ENCODE measurements at regions of chr15 and their contacts with region 1.

Region 1: GRCh38 chr15:42723054-42723453 is 13.9 kb downstream of the CDAN1 start:
- DNase-seq: no peak
- ATAC-seq: no peak
- H3K4me3 ChIP-seq: no peak overlapping the region
- H3K27ac ChIP-seq: no peak overlapping the region
- H3K4me1 ChIP-seq: no peaks in the 10 kb centered on the region
- H3K27me3 ChIP-seq: no peaks in the 10 kb centered on the region
- CTCF ChIP-seq: no peak

Region 2: GRCh38 chr15:42591238-42591934 is 131.7 kb before region 1 on chr15:
- intact Hi-C with region 1: no loop called
- DNase-seq: no peak
- ATAC-seq: no peak
- H3K4me3 ChIP-seq: no peak overlapping the region
- H3K27ac ChIP-seq: no peak overlapping the region
- H3K4me1 ChIP-seq: peaks cover 0 to 69% (median 37%) of the 10 kb centered on the region in 9 donors
- H3K27me3 ChIP-seq: no peaks in the 10 kb centered on the region
- CTCF ChIP-seq: peak in 6 of 9 donors; percentile 14 to 42 (median 35)

Region 3: GRCh38 chr15:42650208-42651066 is 72.6 kb before region 1 on chr15:
- intact Hi-C with region 1: no loop called
- DNase-seq: peak in 1 of 2 donors; percentile 71
- ATAC-seq: peak; percentile 85 to 97 (median 95)
- H3K4me3 ChIP-seq: no peak overlapping the region
- H3K27ac ChIP-seq: no peak overlapping the region
- H3K4me1 ChIP-seq: peaks cover 0 to 17% (median 3%) of the 10 kb centered on the region in 9 donors
- H3K27me3 ChIP-seq: no peaks in the 10 kb centered on the region
- CTCF ChIP-seq: peak; percentile 53 to 92 (median 82)

Region 4: DNA sequence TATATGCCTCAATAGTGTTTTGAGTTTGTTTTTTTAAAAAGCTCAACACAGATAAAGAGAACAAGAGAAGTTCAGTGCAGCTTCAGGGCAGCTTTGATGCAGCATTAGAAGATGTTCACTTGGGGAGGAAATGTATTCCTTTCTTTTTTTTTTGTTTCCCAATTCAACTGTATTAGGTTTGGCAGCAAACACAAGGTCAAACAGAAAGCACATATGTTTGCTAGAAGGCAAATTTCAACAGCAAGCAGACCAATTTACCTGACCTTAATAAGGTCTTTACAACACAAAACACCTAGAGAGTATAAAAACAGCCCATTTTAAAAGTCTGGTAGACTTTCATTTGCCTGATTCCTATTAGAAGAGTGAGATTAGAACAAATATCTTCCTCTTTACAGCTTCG is 21.1 kb after region 1 on chr15:
- intact Hi-C with region 1: loop called in 1 of 10 experiments (anchors 2 kb)
- DNase-seq: no peak
- ATAC-seq: no peak
- H3K4me3 ChIP-seq: no peak overlapping the region
- H3K27ac ChIP-seq: no peak overlapping the region
- H3K4me1 ChIP-seq: peaks cover 0 to 9% (median 0%) of the 10 kb centered on the region in 9 donors
- H3K27me3 ChIP-seq: no peaks in the 10 kb centered on the region
- CTCF ChIP-seq: no peak

Region 5: GRCh38 chr15:42772144-42772543 is 49.1 kb after region 1 on chr15:
- intact Hi-C with region 1: no loop called
- DNase-seq: peak; percentile 25 to 28
- ATAC-seq: peak in 3 of 8 donors; percentile 43 to 61 (median 46)
- H3K4me3 ChIP-seq: no peak overlapping the region
- H3K27ac ChIP-seq: no peak overlapping the region
- H3K4me1 ChIP-seq: peaks cover 0 to 15% (median 8%) of the 10 kb centered on the region in 9 donors
- H3K27me3 ChIP-seq: no peaks in the 10 kb centered on the region
- CTCF ChIP-seq: no peak

Region 6: DNA sequence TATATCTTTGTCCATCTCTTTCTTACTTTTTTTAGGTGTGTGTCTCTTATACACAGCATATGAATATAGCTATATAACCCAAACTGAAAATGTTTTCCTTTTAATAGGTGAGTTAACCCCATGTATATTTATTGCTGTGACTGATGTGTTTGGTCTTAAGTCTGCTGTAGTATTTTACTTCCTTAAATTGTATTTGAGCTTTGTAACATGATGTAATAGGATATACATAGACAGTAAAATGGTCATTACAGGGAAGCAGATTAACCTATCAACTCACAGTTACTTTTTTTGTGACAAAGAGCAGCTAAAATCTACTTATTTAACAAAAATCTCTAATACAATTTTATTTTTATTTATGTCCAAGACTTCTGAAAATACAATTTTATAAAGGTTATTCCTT is 65.7 kb after region 1 on chr15:
- intact Hi-C with region 1: loop called in 1 of 10 experiments (anchors 10 kb)
- DNase-seq: no peak
- ATAC-seq: no peak
- H3K4me3 ChIP-seq: no peak overlapping the region
- H3K27ac ChIP-seq: no peak overlapping the region
- H3K4me1 ChIP-seq: no peaks in the 10 kb centered on the region
- H3K27me3 ChIP-seq: no peaks in the 10 kb centered on the region
- CTCF ChIP-seq: no peak

Region 7: DNA sequence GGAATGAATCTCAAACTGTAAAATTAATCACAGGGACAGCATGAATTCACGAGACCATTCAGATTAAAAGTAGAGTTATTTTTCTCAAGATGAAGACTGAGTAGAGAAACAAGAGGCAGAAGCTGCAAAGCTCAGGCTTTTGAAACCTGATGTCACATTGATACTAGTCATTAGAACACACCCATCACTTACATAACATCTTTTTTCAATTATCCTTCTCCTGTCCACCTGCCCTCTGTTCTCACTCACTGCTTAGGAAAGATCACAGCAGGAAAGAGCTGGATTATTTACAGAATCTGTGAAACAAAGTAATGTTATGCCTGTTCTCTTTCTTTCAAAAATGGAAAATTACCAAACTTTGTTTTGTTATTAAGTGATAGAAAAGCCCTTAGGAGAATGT is 85.9 kb after region 1 on chr15:
- intact Hi-C with region 1: no loop called
- DNase-seq: no peak
- ATAC-seq: no peak
- H3K4me3 ChIP-seq: no peak overlapping the region
- H3K27ac ChIP-seq: no peak overlapping the region
- H3K4me1 ChIP-seq: no peaks in the 10 kb centered on the region
- H3K27me3 ChIP-seq: no peaks in the 10 kb centered on the region
- CTCF ChIP-seq: no peak